K562 (cell line): ENCODE measurements at regions of chrX and their contacts with region 1.

Region 1: GRCh38 chrX:111098874-111099273 is 2.9 kb downstream of the PAK3 start:
- DNase-seq: peak; percentile 55 to 69 (median 64)
- ATAC-seq: peak; percentile 92
- H3K4me3 ChIP-seq: no peak overlapping the region
- H3K27ac ChIP-seq: no peak overlapping the region
- H3K4me1 ChIP-seq: peaks cover 0 to 6% of the 10 kb centered on the region in 2 experiments; a peak in 1 of 5 replicates
- H3K27me3 ChIP-seq: no peaks in the 10 kb centered on the region
- CTCF ChIP-seq: peak; percentile 59 to 77 (median 68)
- EP300 ChIP-seq: no peak
- POLR2A ChIP-seq: no peak
- RAD21 ChIP-seq: peak in 1 of 2 experiments; percentile 29; a peak in 1 of 4 replicates

Region 2: DNA sequence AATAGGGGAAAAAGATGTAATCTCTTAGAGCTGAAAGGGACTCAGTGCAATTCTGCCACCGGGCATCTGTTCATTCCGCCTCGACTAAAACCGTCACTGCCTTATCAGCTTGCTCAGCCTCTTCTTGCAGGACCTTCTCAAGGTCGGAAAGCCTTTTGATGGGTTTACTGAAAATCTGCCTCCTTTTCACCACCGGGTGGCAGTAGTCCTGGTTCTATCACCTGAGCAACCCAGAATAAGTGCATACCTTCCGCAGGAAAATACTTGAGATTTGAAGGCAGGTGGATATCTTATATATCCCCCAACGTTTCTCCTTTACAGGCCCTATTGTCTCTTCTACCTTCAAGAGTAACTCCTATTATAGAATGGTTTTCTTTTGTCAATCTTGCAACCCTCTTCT is 106.3 kb before region 1 on chrX:
- CTCF ChIA-PET with region 1: no interaction called
- POLR2A ChIA-PET with region 1: no interaction called
- in situ Hi-C with region 1: no loop called
- intact Hi-C with region 1: loop called (anchors 10 kb)
- DNase-seq: peak; percentile 20 to 29 (median 24)
- ATAC-seq: peak; percentile 62; the same call in 2 of the 3 replicates
- H3K4me3 ChIP-seq: no peak overlapping the region
- H3K27ac ChIP-seq: no peak overlapping the region
- H3K4me1 ChIP-seq: no peaks in the 10 kb centered on the region
- H3K27me3 ChIP-seq: no peaks in the 10 kb centered on the region
- CTCF ChIP-seq: peak; percentile 41 to 47 (median 44); a peak in 5 of 6 replicates
- EP300 ChIP-seq: no peak
- POLR2A ChIP-seq: no peak
- RAD21 ChIP-seq: peak in 1 of 2 experiments; percentile 26; a peak in 2 of 4 replicates

Region 3: GRCh38 chrX:111254896-111255693 is 156.2 kb after region 1 on chrX:
- CTCF ChIA-PET with region 1: no interaction called
- POLR2A ChIA-PET with region 1: no interaction called
- in situ Hi-C with region 1: no loop called
- intact Hi-C with region 1: no loop called
- DNase-seq: no peak
- ATAC-seq: no peak
- H3K4me3 ChIP-seq: no peak overlapping the region
- H3K27ac ChIP-seq: no peak overlapping the region
- H3K4me1 ChIP-seq: no peaks in the 10 kb centered on the region
- H3K27me3 ChIP-seq: no peaks in the 10 kb centered on the region
- CTCF ChIP-seq: no peak
- EP300 ChIP-seq: no peak
- POLR2A ChIP-seq: no peak
- RAD21 ChIP-seq: no peak

Region 4: GRCh38 chrX:111372086-111372485 is 273.2 kb after region 1 on chrX:
- CTCF ChIA-PET with region 1: no interaction called
- POLR2A ChIA-PET with region 1: no interaction called
- in situ Hi-C with region 1: no loop called
- intact Hi-C with region 1: no loop called
- DNase-seq: no peak
- ATAC-seq: no peak
- H3K4me3 ChIP-seq: no peak overlapping the region
- H3K27ac ChIP-seq: no peak overlapping the region
- H3K4me1 ChIP-seq: no peaks in the 10 kb centered on the region
- H3K27me3 ChIP-seq: no peaks in the 10 kb centered on the region
- CTCF ChIP-seq: no peak
- EP300 ChIP-seq: no peak
- POLR2A ChIP-seq: no peak
- RAD21 ChIP-seq: no peak